ENCODE measurements at regions of chr7 and their contacts with region 1.

Region 1: GRCh38 chr7:157222687-157223086 is 84.0 kb downstream of the UBE3C start:
- DNase-seq: no peak
- H3K4me3 ChIP-seq: no peak overlapping the region
- H3K27ac ChIP-seq: no peak overlapping the region
- H3K27me3 ChIP-seq: no peaks in the 10 kb centered on the region
- CTCF ChIP-seq: no peak

Region 2: DNA sequence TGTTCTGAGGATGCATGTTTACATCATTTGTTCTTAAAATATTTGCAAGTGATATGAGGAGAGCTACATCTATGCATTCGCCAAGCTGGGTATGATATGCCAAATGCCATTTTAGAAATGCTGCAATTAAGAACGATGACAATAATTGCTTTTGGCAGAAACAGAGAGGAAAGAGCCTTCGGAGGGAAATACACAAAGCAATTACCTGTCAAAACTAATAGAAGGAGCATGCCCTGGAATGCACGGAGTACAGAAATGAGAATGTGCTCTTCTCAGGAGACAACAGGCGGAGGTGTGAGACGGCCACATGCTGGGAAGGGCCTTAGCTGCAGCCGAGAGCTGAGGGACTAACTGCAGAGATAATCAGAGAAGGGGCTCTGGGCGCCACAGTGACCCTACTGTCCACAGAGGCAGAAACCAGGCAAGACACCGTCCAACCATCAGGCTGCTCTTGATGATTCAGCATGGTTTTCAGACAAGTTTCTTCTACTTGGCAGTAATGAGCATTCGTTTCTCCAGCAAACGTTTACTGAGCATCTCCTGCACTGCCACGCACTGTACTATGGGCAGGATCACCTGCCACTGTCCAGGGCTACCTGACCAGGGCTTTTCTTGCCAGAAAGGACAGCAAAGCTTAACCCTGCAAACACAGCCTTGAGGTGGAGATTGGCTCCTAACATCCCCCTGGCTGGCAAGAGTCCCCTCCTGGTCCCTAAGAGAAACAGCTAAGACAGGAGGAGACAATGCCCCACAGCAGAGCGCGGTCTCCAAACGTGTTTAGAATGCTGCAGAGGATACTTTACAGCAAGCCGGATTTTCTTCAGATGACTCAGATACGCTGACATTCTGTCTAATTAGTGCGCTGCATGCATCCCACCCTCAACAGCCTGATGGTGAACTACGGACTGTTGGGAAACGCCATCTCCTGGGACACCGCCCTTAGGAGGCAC is 1903.9 kb after region 1 on chr7:
- CTCF ChIA-PET with region 1: interaction called, 10 read pairs
- POLR2A ChIA-PET with region 1: no interaction called
- DNase-seq: no peak
- H3K4me3 ChIP-seq: no peak overlapping the region
- H3K27ac ChIP-seq: no peak overlapping the region
- H3K27me3 ChIP-seq: no peaks in the 10 kb centered on the region
- CTCF ChIP-seq: no peak

Measured in AG04450 (cell line).